ENCODE measurements at regions of chr10 and their contacts with region 1.

Region 1: DNA sequence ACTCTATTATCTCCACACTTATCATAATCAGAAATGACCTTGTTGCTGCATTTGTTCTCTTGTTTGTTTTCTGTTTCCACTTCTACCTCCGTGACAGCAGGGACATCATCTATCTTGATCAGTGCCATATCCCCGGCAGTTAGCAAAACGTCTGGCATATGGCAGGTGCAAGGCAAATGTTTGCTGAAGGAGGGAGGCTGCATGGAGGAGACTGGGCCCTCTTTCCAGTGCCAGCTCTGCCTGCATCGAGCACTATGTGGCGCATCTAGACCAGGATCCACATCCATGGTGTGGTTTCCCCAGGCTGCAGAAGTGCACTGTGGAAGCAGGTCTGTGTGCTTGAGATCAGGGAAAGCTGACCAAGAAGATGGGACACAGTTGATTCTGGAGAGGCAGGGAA is 181.2 kb downstream of the KCNMA1 start:
- DNase-seq: no peak
- H3K4me3 ChIP-seq: no peak overlapping the region
- H3K27ac ChIP-seq: no peak overlapping the region
- H3K4me1 ChIP-seq: peaks cover 0 to 34% (median 26%) of the 10 kb centered on the region in 4 donors
- H3K27me3 ChIP-seq: no peaks in the 10 kb centered on the region
- CTCF ChIP-seq: no peak
- EP300 ChIP-seq: no peak
- POLR2A ChIP-seq: no peak

Region 2: GRCh38 chr10:77441353-77442166 is 14.9 kb before region 1 on chr10:
- intact Hi-C with region 1: loop called (anchors 2 kb)
- DNase-seq: no peak
- H3K4me3 ChIP-seq: no peak overlapping the region
- H3K27ac ChIP-seq: peak overlapping the region in 3 of 4 donors; percentile 6 to 27 (median 24)
- H3K4me1 ChIP-seq: peaks cover 0 to 63% (median 30%) of the 10 kb centered on the region in 4 donors
- H3K27me3 ChIP-seq: no peaks in the 10 kb centered on the region
- CTCF ChIP-seq: no peak
- EP300 ChIP-seq: no peak
- POLR2A ChIP-seq: no peak